ENCODE measurements at regions of chr22 and their contacts with region 1.

Region 1: DNA sequence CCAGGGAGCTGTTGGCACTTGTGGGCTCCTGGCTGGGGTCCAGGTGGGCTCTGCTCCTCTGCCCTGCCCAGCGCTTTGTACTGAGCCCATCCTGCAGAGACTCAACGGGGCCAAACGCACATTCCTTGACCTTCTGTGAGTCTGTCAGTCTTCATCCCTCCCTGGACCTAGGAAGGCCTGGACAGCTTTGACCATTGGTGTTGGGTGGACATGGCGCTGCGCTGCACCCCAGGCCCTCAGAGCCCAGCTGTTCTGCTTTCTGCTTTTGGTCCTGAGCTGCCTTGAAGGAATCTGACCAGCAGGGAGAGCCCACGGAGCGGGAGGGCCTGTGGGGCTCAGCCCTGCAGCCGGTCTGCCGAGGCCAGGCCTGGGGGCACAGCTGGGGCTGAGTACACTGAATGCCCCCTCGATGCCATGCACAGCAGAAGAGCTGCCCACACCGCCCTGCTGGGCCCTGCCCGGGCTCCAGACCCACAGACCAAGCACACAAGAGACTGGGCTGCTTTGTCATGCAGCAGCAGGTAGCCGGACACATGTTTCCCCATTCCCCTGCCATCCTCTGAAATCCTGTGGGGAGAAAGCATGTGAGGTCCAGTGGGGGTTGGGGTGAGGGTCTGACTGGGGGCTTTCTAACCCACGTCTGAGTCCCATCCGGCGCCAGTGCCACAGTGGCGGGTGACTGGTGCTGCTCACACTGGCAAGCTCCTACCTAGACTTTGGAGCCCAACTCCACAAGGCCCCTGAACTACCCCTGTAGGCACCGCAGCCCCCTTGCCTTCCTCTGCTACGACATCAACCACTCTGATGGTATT is 24.1 kb upstream of the CCDC188 start:
- DNase-seq: no peak
- H3K4me3 ChIP-seq: no peak overlapping the region
- H3K27ac ChIP-seq: no peak overlapping the region; the same call in 1 of the 2 replicates
- H3K4me1 ChIP-seq: peaks cover 0 to 8% (median 0%) of the 10 kb centered on the region in 4 experiments; a peak in 2 of 7 replicates
- H3K27me3 ChIP-seq: no peaks in the 10 kb centered on the region
- CTCF ChIP-seq: peak; percentile 22 to 39 (median 32); a peak in 3 of 4 replicates
- EP300 ChIP-seq: no peak
- POLR2A ChIP-seq: no peak
- RAD21 ChIP-seq: peak; percentile 29 to 49; a peak in 3 of 4 replicates

Region 2: DNA sequence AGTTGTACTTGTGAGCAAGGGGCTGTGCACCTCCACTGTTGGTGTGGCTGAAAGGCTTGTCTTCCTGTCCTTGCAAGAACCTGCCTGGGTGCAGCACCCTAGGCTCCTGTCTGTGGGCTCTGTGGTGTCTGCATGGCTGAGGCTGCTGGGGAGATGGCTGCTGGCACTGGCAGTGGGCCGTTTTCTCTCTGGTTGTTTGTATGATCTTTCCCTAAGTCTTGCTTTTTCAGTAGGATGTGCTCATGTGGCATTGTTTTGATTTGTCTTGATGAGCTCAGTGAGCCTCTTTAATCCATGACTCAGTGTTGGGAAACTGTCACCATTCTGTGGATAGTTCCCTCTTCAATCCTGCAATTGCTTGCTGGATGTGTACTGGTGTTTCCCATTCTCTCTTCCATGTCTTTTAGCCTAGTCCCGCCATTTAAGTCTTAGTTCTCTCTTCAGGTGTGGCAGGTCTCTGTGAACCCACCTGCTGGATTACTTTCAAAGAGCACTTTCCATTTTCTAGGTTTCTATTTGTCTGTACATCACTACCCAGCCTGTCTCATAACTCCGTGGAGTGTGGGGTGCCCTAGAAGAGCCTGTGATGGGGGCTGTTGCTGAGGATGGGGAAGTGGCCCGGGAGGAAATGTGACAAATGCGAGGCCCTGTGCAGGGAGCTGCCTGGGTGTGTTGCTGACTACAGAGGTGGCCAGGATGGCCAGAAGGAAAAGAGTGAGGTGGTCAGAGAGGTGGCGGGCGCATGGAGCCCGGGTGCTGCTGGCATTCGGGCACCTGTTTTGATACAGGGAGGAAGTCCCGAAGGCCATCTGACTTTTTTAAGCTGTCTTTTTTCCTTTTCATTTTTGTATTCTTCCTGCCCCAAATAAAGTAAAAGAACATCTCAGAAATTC is 84.4 kb before region 1 on chr22:
- CTCF ChIA-PET with region 1: no interaction called
- POLR2A ChIA-PET with region 1: no interaction called
- DNase-seq: no peak
- H3K4me3 ChIP-seq: no peak overlapping the region
- H3K27ac ChIP-seq: no peak overlapping the region
- H3K4me1 ChIP-seq: no peaks in the 10 kb centered on the region
- H3K27me3 ChIP-seq: no peaks in the 10 kb centered on the region
- CTCF ChIP-seq: no peak
- EP300 ChIP-seq: no peak
- POLR2A ChIP-seq: no peak
- RAD21 ChIP-seq: no peak

Region 3: GRCh38 chr22:20111045-20111688 is 63.8 kb before region 1 on chr22:
- CTCF ChIA-PET with region 1: no interaction called
- POLR2A ChIA-PET with region 1: no interaction called
- DNase-seq: no peak
- H3K4me3 ChIP-seq: no peak overlapping the region
- H3K27ac ChIP-seq: no peak overlapping the region
- H3K4me1 ChIP-seq: no peaks in the 10 kb centered on the region
- H3K27me3 ChIP-seq: no peaks in the 10 kb centered on the region
- CTCF ChIP-seq: peak; percentile 48 to 60 (median 57)
- EP300 ChIP-seq: no peak
- POLR2A ChIP-seq: no peak; a peak in 1 of 3 replicates
- RAD21 ChIP-seq: no peak

Region 4: DNA sequence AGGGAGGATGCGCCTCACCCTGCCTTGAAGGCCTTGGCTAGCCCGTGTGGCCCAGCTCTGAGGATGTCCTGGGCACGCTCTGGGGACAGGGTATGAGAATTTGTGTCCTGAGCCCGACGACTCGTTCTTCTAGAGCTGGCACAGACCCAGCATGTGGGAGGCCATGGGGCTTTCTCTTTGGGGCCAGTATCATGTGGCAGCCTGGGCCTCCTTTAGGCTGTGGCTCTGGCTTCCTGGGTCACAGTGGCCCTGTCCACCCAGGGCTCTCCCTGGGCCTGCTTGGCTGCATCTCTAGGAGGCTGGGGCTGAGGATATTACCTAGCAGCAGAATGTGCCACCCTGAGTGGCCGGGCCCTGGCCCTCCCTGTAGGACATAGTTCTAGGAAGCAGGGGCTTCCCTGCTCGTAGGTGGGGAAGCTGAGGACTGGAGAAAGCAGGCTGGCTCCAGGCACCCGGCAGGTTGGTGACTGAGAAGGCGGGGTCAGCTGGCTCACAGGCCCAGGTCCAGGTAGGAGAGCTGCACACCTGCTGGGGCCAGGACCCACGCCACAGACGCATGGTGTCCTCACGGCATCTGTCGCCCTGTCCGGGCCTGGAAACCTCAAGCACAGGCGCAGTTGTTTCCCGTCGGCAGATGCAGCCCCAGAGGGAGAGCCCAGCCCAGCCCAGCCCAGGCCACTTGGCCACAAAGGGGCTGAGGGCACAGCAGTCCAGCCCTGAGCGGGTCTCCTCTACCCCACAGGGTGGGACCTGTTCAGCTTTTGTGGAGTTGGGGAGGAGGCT is 30.9 kb before region 1 on chr22:
- CTCF ChIA-PET with region 1: no interaction called
- POLR2A ChIA-PET with region 1: no interaction called
- DNase-seq: no peak
- H3K4me3 ChIP-seq: no peak overlapping the region
- H3K27ac ChIP-seq: no peak overlapping the region
- H3K4me1 ChIP-seq: no peaks in the 10 kb centered on the region
- H3K27me3 ChIP-seq: no peaks in the 10 kb centered on the region
- CTCF ChIP-seq: no peak
- EP300 ChIP-seq: no peak
- POLR2A ChIP-seq: no peak
- RAD21 ChIP-seq: no peak

Region 5: GRCh38 chr22:20186183-20186870 is 11.3 kb after region 1 on chr22:
- CTCF ChIA-PET with region 1: interaction called, 22 read pairs
- POLR2A ChIA-PET with region 1: no interaction called
- DNase-seq: peak; percentile 61 to 69
- H3K4me3 ChIP-seq: no peak overlapping the region
- H3K27ac ChIP-seq: no peak overlapping the region
- H3K4me1 ChIP-seq: peaks cover 0 to 4% (median 2%) of the 10 kb centered on the region in 4 experiments; a peak in 2 of 7 replicates
- H3K27me3 ChIP-seq: no peaks in the 10 kb centered on the region
- CTCF ChIP-seq: peak; percentile 54 to 73 (median 64)
- EP300 ChIP-seq: no peak
- POLR2A ChIP-seq: no peak
- RAD21 ChIP-seq: peak; percentile 20 to 53

Region 6: GRCh38 chr22:20194681-20195593 is 19.9 kb after region 1 on chr22:
- CTCF ChIA-PET with region 1: interaction called, 10 read pairs
- POLR2A ChIA-PET with region 1: interaction called, 3 read pairs
- DNase-seq: no peak
- H3K4me3 ChIP-seq: no peak overlapping the region
- H3K27ac ChIP-seq: no peak overlapping the region
- H3K4me1 ChIP-seq: no peaks in the 10 kb centered on the region
- H3K27me3 ChIP-seq: no peaks in the 10 kb centered on the region
- CTCF ChIP-seq: peak; percentile 1 to 15 (median 11); a peak in 3 of 4 replicates
- EP300 ChIP-seq: no peak
- POLR2A ChIP-seq: no peak
- RAD21 ChIP-seq: no peak

Region 7: GRCh38 chr22:20211997-20212753 is 37.2 kb after region 1 on chr22:
- CTCF ChIA-PET with region 1: interaction called, 15 read pairs
- POLR2A ChIA-PET with region 1: interaction called, 4 read pairs
- DNase-seq: no peak
- H3K4me3 ChIP-seq: no peak overlapping the region
- H3K27ac ChIP-seq: no peak overlapping the region
- H3K4me1 ChIP-seq: no peaks in the 10 kb centered on the region; a peak in 1 of 7 replicates
- H3K27me3 ChIP-seq: no peaks in the 10 kb centered on the region
- CTCF ChIP-seq: no peak
- EP300 ChIP-seq: no peak
- POLR2A ChIP-seq: no peak
- RAD21 ChIP-seq: no peak

Region 8: GRCh38 chr22:20229916-20230775 is 55.2 kb after region 1 on chr22:
- CTCF ChIA-PET with region 1: interaction called, 11 read pairs
- POLR2A ChIA-PET with region 1: no interaction called
- DNase-seq: no peak
- H3K4me3 ChIP-seq: no peak overlapping the region
- H3K27ac ChIP-seq: no peak overlapping the region
- H3K4me1 ChIP-seq: peaks cover 0 to 3% (median 0%) of the 10 kb centered on the region in 4 experiments; a peak in 2 of 7 replicates
- H3K27me3 ChIP-seq: no peaks in the 10 kb centered on the region
- CTCF ChIP-seq: no peak
- EP300 ChIP-seq: no peak
- POLR2A ChIP-seq: no peak
- RAD21 ChIP-seq: no peak

Region 9: GRCh38 chr22:20283674-20284066 is 108.7 kb after region 1 on chr22:
- CTCF ChIA-PET with region 1: interaction called, 14 read pairs
- POLR2A ChIA-PET with region 1: no interaction called
- DNase-seq: no peak
- H3K4me3 ChIP-seq: no peak overlapping the region
- H3K27ac ChIP-seq: no peak overlapping the region
- H3K4me1 ChIP-seq: no peaks in the 10 kb centered on the region
- H3K27me3 ChIP-seq: no peaks in the 10 kb centered on the region
- CTCF ChIP-seq: no peak
- EP300 ChIP-seq: no peak
- POLR2A ChIP-seq: no peak
- RAD21 ChIP-seq: no peak